CD14-positive monocyte (primary cell): ENCODE measurements at regions of chr19 and their contacts with region 1.

Region 1: GRCh38 chr19:45092747-45093678 is at the start of gene PPP1R37:
- DNase-seq: peak; percentile 93 to 96 (median 95)
- H3K4me3 ChIP-seq: peak within 1 kb of the TSS; percentile 66 to 96 (median 80)
- H3K4me3 Mint-ChIP-seq: peak within 1 kb of the TSS; percentile 87 to 99
- H3K27ac ChIP-seq: peak within 1 kb of the TSS; percentile 72 to 96
- H3K27ac Mint-ChIP-seq: peak within 1 kb of the TSS; percentile 97 to 100 (median 100)
- H3K4me1 ChIP-seq: peaks cover 22 to 36% of the 10 kb centered on the region in 2 donors
- H3K4me1 Mint-ChIP-seq: peaks cover 54% of the 10 kb centered on the region
- H3K27me3 ChIP-seq: no peaks in the 10 kb centered on the region
- H3K27me3 Mint-ChIP-seq: peaks cover 0 to 4% (median 0%) of the 10 kb centered on the region in 3 donors
- CTCF ChIP-seq: peak; percentile 48
- polyA plus RNA-seq, gene PPP1R37: 0.10 to 11.8 (median 0.22) TPM

Region 2: GRCh38 chr19:45047188-45047797 is 45.7 kb before region 1 on chr19:
- intact Hi-C with region 1: loop called in 1 of 2 experiments (anchors 5 kb)
- DNase-seq: peak; percentile 57 to 69 (median 59)
- H3K4me3 ChIP-seq: peak overlapping the region; percentile 35 to 74 (median 41)
- H3K4me3 Mint-ChIP-seq: peak overlapping the region; percentile 76 to 91
- H3K27ac ChIP-seq: peak overlapping the region; percentile 61 to 72
- H3K27ac Mint-ChIP-seq: peak overlapping the region; percentile 90 to 97 (median 93)
- H3K4me1 ChIP-seq: peaks cover 26 to 30% of the 10 kb centered on the region in 2 donors
- H3K4me1 Mint-ChIP-seq: peaks cover 44% of the 10 kb centered on the region
- H3K27me3 ChIP-seq: no peaks in the 10 kb centered on the region
- H3K27me3 Mint-ChIP-seq: peaks cover 0 to 2% (median 1%) of the 10 kb centered on the region in 3 donors
- CTCF ChIP-seq: no peak

Region 3: DNA sequence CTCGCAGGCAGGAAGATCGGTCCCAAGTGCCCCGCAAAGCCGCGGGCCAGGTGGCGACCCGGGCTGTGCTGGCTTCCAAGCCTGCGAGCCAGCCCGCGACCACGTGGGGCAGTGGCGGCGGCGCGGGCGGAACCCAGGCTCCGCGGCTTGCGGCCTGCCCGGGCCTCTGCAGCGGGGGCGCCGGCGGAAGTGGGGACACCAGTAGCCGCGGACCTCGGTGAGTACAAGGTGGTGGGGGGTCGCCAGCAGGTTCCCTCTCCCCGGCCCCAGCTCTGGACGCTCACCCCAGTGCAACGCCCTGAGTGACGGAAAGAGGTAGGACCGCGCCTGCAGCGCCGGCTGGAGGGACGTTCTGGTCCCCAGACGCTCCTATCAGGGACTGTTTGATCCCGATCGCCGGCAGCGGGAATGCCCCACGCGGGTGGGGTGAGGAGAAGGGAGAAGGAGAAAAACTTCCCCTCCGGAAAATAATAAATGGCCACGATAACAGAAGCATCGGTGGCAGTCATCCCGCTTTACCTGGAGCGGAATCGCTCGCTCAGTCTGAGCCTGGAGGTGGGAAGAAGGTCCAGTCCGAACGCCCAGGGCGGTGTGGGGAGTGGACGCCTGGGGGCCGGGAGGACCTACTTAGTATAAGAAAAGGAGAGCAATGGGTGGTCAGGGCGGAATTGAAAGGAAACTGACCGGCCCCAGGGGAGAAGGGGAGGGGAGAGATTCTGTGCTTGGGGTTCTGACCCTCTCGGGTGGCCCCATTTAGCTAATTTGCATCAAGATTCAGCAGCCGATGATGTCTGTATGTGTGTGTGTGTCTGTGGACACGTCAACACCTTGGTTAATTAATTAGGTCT is 13.7 kb before region 1 on chr19 and contains the start of gene GEMIN7:
- intact Hi-C with region 1: loop called in 1 of 2 experiments (anchors 1 kb)
- DNase-seq: peak; percentile 54 to 66 (median 57)
- H3K4me3 ChIP-seq: peak within 1 kb of the TSS; percentile 83 to 98 (median 85)
- H3K4me3 Mint-ChIP-seq: peak within 1 kb of the TSS; percentile 92 to 93
- H3K27ac ChIP-seq: peak within 1 kb of the TSS; percentile 12 to 88
- H3K27ac Mint-ChIP-seq: peak within 1 kb of the TSS; percentile 81 to 95 (median 87)
- H3K4me1 ChIP-seq: peaks cover 38 to 55% of the 10 kb centered on the region in 2 donors
- H3K4me1 Mint-ChIP-seq: peaks cover 40% of the 10 kb centered on the region
- H3K27me3 ChIP-seq: no peaks in the 10 kb centered on the region
- H3K27me3 Mint-ChIP-seq: peaks cover 0 to 2% (median 0%) of the 10 kb centered on the region in 3 donors
- CTCF ChIP-seq: no peak
- polyA plus RNA-seq, gene GEMIN7: 67.6 to 83.4 (median 78.4) TPM

Region 4: DNA sequence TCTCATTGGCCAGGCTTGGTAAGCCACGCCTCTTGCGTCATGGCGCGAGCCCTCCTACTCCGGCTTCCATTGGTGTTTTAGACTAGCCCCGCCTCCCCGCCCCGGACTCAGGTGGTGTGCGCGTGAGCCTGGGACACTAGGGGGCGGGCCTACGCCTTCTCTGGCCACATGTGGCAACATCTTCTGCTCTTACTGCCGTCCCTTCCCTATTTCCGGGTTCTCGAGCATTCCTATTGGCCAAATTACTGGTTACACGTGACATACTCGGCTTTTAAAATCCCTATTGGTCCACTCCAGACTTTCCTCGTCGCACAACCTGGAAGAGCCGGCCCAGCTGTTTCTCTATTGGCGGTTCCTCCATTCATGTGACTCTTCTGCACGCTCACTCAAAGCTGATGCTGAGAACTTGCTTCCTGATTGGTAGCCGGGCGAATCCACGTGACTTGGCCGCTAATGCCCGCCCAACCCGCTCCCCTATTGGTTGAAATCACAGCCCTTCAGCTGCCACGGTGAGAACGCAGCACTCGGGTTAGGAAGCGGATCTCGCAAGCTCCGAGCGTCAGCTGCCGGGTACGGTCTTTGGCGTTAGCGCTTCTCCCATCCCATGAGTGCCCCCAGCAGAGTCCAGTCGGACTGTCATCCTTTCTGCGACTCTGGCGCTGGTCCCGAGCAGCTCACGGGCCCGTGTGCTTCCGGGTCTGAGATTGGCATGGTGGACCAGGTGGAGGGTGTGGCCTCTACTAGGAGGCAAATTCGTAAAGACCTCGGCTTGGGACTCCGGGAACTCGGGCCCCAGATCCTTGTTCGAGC is 85.5 kb after region 1 on chr19 and contains the start of gene BLOC1S3:
- intact Hi-C with region 1: loop called in 1 of 2 experiments (anchors 5 kb)
- DNase-seq: peak; percentile 100
- H3K4me3 ChIP-seq: peak within 1 kb of the TSS; percentile 69 to 92 (median 82)
- H3K4me3 Mint-ChIP-seq: peak within 1 kb of the TSS; percentile 88 to 96
- H3K27ac ChIP-seq: peak within 1 kb of the TSS; percentile 92 to 99
- H3K27ac Mint-ChIP-seq: peak within 1 kb of the TSS; percentile 95 to 100 (median 98)
- H3K4me1 ChIP-seq: peaks cover 39 to 53% of the 10 kb centered on the region in 2 donors
- H3K4me1 Mint-ChIP-seq: peaks cover 49% of the 10 kb centered on the region
- H3K27me3 ChIP-seq: no peaks in the 10 kb centered on the region
- H3K27me3 Mint-ChIP-seq: peaks cover 0 to under 1% (median 0%) of the 10 kb centered on the region in 3 donors
- CTCF ChIP-seq: peak; percentile 25
- polyA plus RNA-seq, gene BLOC1S3: 2.9 to 6.7 (median 4.7) TPM

Region 5: GRCh38 chr19:45187421-45188100 is 94.5 kb after region 1 on chr19:
- intact Hi-C with region 1: loop called in 1 of 2 experiments (anchors 5 kb)
- DNase-seq: peak in 1 of 3 donors; percentile 32
- H3K4me3 ChIP-seq: no peak overlapping the region
- H3K4me3 Mint-ChIP-seq: no peak overlapping the region
- H3K27ac ChIP-seq: no peak overlapping the region
- H3K27ac Mint-ChIP-seq: no peak overlapping the region
- H3K4me1 ChIP-seq: peaks cover 22 to 30% of the 10 kb centered on the region in 2 donors
- H3K4me1 Mint-ChIP-seq: peaks cover 29% of the 10 kb centered on the region
- H3K27me3 ChIP-seq: no peaks in the 10 kb centered on the region
- H3K27me3 Mint-ChIP-seq: peaks cover 0 to 6% (median 2%) of the 10 kb centered on the region in 3 donors
- CTCF ChIP-seq: peak; percentile 65